Activated B cell treated with CpG ODN at 0.5 μM for 24 hours (primary cell): ENCODE measurements at regions of chrX and their contacts with region 1.

Region 1: GRCh38 chrX:386768-387575 is at the start of gene PPP2R3B:
- DNase-seq: peak; percentile 96
- ATAC-seq: peak; percentile 94
- H3K4me3 Mint-ChIP-seq: peak within 1 kb of the TSS; percentile 92
- H3K27ac Mint-ChIP-seq: peak within 1 kb of the TSS; percentile 98
- H3K4me1 Mint-ChIP-seq: peaks cover 10% of the 10 kb centered on the region
- H3K27me3 Mint-ChIP-seq: peaks cover 3% of the 10 kb centered on the region
- CTCF ChIP-seq: no peak
- total RNA-seq, gene PPP2R3B: 15.4 and 15.5 TPM in 2 replicates

Region 2: DNA sequence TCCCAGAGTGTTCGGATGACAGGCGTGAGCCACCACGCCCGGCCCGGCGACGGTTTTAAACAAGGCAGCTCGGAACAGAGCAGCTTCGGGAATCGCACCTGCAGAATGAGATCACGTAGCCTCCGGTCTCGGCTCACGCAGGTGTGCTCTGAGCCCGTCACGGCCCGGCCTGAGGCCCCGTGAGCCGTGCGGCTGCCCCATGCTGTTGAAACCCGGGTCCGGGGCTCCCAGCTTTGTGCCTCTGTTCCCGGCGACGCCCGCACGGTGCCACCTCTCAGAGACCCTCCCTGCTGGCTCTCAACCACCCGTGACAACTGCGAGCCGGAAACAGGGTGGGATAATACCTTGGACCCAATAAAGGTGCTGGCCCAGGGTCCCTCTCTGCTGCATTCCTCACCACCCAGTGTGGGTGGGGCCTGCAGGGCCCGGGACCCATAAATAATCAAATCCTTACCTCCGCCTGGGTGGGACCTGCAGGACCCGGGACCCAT is 119.2 kb before region 1 on chrX:
- CTCF ChIA-PET with region 1: no interaction called
- POLR2A ChIA-PET with region 1: no interaction called
- intact Hi-C with region 1: no loop called
- DNase-seq: no peak
- ATAC-seq: no peak
- H3K4me3 Mint-ChIP-seq: no peak overlapping the region
- H3K27ac Mint-ChIP-seq: no peak overlapping the region
- H3K4me1 Mint-ChIP-seq: no peaks in the 10 kb centered on the region
- H3K27me3 Mint-ChIP-seq: no peaks in the 10 kb centered on the region
- CTCF ChIP-seq: no peak

Region 3: GRCh38 chrX:283115-283845 is 103.7 kb before region 1 on chrX:
- CTCF ChIA-PET with region 1: no interaction called
- POLR2A ChIA-PET with region 1: no interaction called
- intact Hi-C with region 1: loop called (anchors 2 kb)
- DNase-seq: peak; percentile 81
- ATAC-seq: peak; percentile 98
- H3K4me3 Mint-ChIP-seq: peak overlapping the region; percentile 92
- H3K27ac Mint-ChIP-seq: peak overlapping the region; percentile 84
- H3K4me1 Mint-ChIP-seq: peaks cover 16% of the 10 kb centered on the region
- H3K27me3 Mint-ChIP-seq: no peaks in the 10 kb centered on the region
- CTCF ChIP-seq: no peak

Region 4: GRCh38 chrX:318739-319578 is 68.0 kb before region 1 on chrX and contains the start of gene GTPBP6:
- CTCF ChIA-PET with region 1: no interaction called
- POLR2A ChIA-PET with region 1: no interaction called
- intact Hi-C with region 1: loop called (anchors 1 kb)
- DNase-seq: peak; percentile 97
- ATAC-seq: peak; percentile 75
- H3K4me3 Mint-ChIP-seq: peak within 1 kb of the TSS; percentile 94
- H3K27ac Mint-ChIP-seq: peak within 1 kb of the TSS; percentile 98
- H3K4me1 Mint-ChIP-seq: peaks cover 32% of the 10 kb centered on the region
- H3K27me3 Mint-ChIP-seq: no peaks in the 10 kb centered on the region
- CTCF ChIP-seq: no peak
- total RNA-seq, gene GTPBP6: 69.9 and 75.6 TPM in 2 replicates

Region 5: DNA sequence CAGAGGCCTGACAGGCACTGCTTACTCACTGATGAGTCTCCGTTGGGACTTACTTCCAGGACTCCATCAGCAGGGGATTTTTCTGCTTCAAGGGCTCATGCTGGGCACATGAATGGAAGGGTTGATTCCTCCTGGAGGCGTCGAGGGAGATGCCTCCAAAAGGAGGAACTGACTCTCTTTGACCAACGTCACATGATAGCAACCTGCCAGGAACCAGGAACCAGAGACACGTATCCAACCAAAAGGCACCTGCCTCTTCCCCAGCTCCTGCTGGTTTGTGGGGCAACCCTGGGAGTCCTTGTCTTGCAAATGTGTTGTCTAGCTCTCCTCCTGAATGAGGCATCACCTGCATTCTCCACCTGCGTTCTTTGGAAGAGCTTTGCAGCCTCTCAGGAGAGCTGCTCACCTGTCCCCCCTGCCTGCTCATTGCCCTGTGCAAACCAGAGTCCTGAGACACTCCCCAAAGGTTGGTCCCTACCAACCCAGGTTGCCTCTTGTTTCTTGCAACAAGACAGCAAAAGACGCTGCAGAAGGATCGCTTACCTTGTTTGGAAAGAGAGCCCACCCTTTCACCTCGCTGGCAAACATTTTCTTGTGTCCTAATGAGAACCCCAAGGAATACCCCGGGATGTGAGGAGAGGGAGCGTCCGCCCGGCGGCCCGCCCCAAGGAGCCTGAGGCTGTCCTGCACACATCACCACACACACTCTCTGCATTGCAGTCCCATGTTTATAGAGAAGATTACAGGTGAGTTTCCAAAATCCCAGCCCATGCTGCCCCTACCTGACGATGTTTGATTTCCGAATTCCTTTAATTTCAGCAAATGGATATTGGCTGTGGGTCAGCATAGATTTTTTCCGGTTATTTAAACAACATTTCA is 213.1 kb after region 1 on chrX:
- CTCF ChIA-PET with region 1: no interaction called
- POLR2A ChIA-PET with region 1: no interaction called
- intact Hi-C with region 1: no loop called
- DNase-seq: no peak
- ATAC-seq: no peak
- H3K4me3 Mint-ChIP-seq: no peak overlapping the region
- H3K27ac Mint-ChIP-seq: no peak overlapping the region
- H3K4me1 Mint-ChIP-seq: no peaks in the 10 kb centered on the region
- H3K27me3 Mint-ChIP-seq: no peaks in the 10 kb centered on the region
- CTCF ChIP-seq: no peak

Region 6: DNA sequence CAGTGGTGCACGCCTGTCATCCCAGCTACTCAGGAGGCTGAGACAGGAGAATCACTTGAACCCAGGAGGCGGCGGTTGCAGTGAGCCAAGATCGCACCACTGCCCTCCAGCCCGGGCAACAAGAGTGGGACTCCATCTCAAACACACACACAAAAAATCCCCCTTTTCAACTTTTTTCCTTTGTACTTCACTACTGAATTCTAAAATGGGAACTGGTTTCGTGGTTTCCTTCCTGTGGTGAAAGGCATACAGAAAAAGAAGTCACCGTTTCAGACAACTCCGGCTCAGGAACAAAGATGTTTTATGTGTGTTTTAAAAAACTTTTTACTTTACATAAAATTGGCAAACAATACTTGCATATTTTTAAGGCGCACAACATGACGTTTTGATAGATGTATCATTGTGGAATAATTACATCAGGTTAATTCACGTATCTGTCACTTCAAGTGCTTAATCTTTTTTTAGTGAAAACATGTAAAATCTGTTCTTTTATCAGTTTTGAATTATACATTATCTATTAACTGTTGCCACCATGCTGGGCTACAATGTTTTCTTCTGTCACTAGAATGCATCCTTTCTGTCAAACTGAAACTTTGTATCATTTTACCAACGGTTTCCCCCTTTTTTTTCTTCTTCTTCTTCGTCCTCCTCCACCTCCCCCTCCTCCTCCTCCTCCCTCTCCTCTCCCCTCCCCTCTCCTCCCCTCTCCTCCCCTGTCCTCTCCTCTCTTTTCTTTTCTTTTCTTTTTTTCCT is 639.5 kb after region 1 on chrX:
- CTCF ChIA-PET with region 1: no interaction called
- POLR2A ChIA-PET with region 1: no interaction called
- intact Hi-C with region 1: loop called (anchors 5 kb)
- DNase-seq: no peak
- ATAC-seq: no peak
- H3K4me3 Mint-ChIP-seq: peak overlapping the region; percentile 56
- H3K27ac Mint-ChIP-seq: no peak overlapping the region
- H3K4me1 Mint-ChIP-seq: peaks cover 21% of the 10 kb centered on the region
- H3K27me3 Mint-ChIP-seq: peaks cover 4% of the 10 kb centered on the region
- CTCF ChIP-seq: no peak